WTC11 (cell line): ENCODE measurements at regions of chr5 and their contacts with region 1.

Region 1: DNA sequence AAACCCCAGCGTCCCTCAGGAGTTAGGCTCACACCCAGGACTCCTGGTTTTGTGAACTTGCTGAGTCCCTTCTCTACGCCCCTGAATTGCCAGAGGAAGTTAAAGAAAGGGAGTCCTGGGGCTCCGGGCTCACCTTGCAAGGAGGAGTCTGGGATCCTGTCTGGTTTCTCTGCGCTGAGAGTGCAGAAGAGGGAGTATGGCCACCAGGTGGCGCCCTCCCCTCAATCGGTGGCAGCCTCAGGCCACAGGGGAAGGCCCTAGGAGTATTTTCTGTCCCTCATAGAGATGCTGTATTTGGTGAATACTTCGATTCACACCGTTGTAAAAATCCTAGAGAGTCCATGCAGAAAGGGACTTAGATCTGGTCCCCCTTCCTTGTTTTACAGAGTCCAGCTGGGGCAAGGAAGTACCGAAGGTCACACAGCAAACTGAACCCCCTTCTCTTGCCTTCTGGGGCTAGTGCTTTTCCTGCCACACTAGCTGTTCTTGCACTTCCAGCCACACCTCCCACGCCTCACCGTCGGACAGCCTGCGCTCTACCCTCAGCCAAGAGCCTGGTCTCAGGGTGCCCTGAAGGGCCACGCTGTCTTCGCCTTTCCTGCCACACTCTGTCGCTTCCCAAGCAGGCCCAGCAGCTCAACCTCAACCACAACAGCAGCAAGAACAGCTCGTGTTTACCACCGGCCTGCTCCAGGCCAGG is 10.2 kb downstream of the HAND1 start:
- DNase-seq: peak; percentile 90
- ATAC-seq: peak; percentile 96
- H3K4me3 Mint-ChIP-seq: 0 out of 2 replicates have a peak overlapping the region, but pooled peaks have one; percentile 9
- H3K27ac Mint-ChIP-seq: no peak overlapping the region
- H3K4me1 Mint-ChIP-seq: peaks cover 17% of the 10 kb centered on the region
- H3K27me3 Mint-ChIP-seq: peaks cover 70% of the 10 kb centered on the region
- CTCF ChIP-seq: peak; percentile 90

Region 2: DNA sequence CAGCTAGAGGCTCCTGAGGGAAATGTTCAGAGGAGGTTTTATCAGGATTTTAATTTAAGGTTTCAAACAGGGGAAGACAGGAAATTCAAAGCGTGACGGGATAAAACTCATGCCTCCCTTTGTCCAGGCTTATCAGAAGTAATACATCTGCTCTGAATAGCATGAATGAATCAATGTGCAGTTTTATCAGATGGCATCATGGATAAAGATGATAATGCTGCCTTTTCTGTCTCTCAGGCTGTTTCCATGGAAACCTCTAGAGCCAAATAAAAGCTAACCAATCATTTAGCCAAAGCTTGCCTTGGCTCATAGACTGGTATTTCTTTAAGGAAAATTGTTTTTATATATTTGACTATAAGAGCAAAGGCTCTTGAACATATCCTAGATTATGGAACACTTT is 412.6 kb before region 1 on chr5:
- CTCF ChIA-PET with region 1: no interaction called
- POLR2A ChIA-PET with region 1: no interaction called
- DNase-seq: no peak
- ATAC-seq: no peak
- H3K4me3 Mint-ChIP-seq: no peak overlapping the region
- H3K27ac Mint-ChIP-seq: no peak overlapping the region
- H3K4me1 Mint-ChIP-seq: peaks cover 18% of the 10 kb centered on the region
- H3K27me3 Mint-ChIP-seq: peaks cover 3% of the 10 kb centered on the region; the same call in 1 of the 2 replicates
- CTCF ChIP-seq: no peak

Region 3: GRCh38 chr5:154138701-154139100 is 329.1 kb before region 1 on chr5:
- CTCF ChIA-PET with region 1: no interaction called
- POLR2A ChIA-PET with region 1: no interaction called
- DNase-seq: no peak
- ATAC-seq: peak; percentile 17
- H3K4me3 Mint-ChIP-seq: no peak overlapping the region
- H3K27ac Mint-ChIP-seq: no peak overlapping the region
- H3K4me1 Mint-ChIP-seq: peaks cover 32% of the 10 kb centered on the region
- H3K27me3 Mint-ChIP-seq: peaks cover 16% of the 10 kb centered on the region
- CTCF ChIP-seq: no peak

Region 4: DNA sequence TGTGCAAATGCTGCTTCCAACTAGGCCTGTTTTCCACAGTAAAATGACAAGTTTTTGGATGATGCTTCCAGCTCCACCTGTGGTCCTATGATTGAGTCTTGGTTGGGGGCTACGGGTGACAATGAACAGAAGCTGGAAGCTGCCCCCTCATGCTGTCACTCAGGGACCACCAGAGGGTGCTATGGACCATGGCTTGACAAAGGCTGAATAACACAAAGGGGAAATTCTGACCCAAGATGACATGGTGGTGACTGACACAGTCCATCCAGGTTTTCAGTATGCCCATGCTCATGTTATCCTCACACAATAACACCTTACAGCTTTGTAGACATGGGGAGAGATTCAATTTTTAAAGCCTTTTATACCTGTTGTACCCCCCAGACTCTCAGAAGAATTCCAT is 45.9 kb before region 1 on chr5:
- CTCF ChIA-PET with region 1: interaction called, 14 read pairs
- POLR2A ChIA-PET with region 1: no interaction called
- DNase-seq: peak; percentile 65
- ATAC-seq: peak; percentile 86
- H3K4me3 Mint-ChIP-seq: no peak overlapping the region
- H3K27ac Mint-ChIP-seq: no peak overlapping the region
- H3K4me1 Mint-ChIP-seq: peaks cover 11% of the 10 kb centered on the region
- H3K27me3 Mint-ChIP-seq: no peaks in the 10 kb centered on the region
- CTCF ChIP-seq: peak; percentile 48; the same call in 1 of the 2 replicates

Region 5: DNA sequence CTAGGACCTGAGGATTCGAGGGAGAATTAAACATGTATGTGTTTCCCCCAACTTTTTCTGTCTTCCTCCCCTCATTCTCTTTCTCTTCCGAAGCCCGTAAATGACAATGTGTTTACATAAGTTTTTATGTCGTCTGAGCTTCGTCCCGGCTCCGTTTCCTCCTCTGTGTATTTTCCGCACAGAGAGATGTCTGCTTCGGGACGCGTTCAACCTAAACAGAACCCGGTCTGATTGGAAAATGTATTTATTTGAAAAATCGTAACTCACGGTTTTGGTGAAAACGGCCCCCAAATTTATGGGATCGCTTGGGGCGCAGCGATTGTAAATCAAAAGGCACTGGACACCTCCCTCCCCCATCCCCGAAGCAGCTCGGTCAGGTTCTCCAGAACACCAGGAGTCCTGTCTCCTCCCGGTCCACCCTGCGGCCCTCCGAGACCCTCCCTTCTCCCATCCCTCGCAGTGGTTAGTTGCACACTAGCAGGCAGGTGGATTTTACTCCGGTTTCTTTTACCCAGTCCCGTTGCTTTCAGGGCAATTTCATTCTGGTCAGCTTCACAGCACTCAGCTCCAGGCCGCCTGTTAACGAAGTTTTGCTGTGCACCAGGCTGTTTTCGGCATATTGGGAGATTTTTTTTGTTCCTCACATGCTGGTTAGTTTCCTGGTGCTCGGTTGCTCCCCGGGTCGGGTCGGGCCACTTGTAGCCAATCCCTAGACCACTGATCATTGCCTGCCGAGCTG is 16.0 kb after region 1 on chr5:
- CTCF ChIA-PET with region 1: interaction called, 26 read pairs
- POLR2A ChIA-PET with region 1: no interaction called
- DNase-seq: peak; percentile 51
- ATAC-seq: no peak
- H3K4me3 Mint-ChIP-seq: peak overlapping the region; percentile 55
- H3K27ac Mint-ChIP-seq: no peak overlapping the region
- H3K4me1 Mint-ChIP-seq: peaks cover 71% of the 10 kb centered on the region
- H3K27me3 Mint-ChIP-seq: peaks cover 99% of the 10 kb centered on the region
- CTCF ChIP-seq: no peak

Region 6: GRCh38 chr5:154559398-154560276 is 91.8 kb after region 1 on chr5:
- CTCF ChIA-PET with region 1: no interaction called
- POLR2A ChIA-PET with region 1: no interaction called
- DNase-seq: no peak
- ATAC-seq: no peak
- H3K4me3 Mint-ChIP-seq: no peak overlapping the region
- H3K27ac Mint-ChIP-seq: no peak overlapping the region
- H3K4me1 Mint-ChIP-seq: no peaks in the 10 kb centered on the region
- H3K27me3 Mint-ChIP-seq: peaks cover 2% of the 10 kb centered on the region; the same call in 1 of the 2 replicates
- CTCF ChIP-seq: no peak

Region 7: GRCh38 chr5:154575546-154576428 is 108.0 kb after region 1 on chr5:
- CTCF ChIA-PET with region 1: interaction called, 10 read pairs
- POLR2A ChIA-PET with region 1: no interaction called
- DNase-seq: no peak
- ATAC-seq: peak; percentile 23; the same call in 1 of the 2 replicates
- H3K4me3 Mint-ChIP-seq: no peak overlapping the region
- H3K27ac Mint-ChIP-seq: no peak overlapping the region
- H3K4me1 Mint-ChIP-seq: peaks cover 14% of the 10 kb centered on the region
- H3K27me3 Mint-ChIP-seq: peaks cover 4% of the 10 kb centered on the region
- CTCF ChIP-seq: no peak

Region 8: DNA sequence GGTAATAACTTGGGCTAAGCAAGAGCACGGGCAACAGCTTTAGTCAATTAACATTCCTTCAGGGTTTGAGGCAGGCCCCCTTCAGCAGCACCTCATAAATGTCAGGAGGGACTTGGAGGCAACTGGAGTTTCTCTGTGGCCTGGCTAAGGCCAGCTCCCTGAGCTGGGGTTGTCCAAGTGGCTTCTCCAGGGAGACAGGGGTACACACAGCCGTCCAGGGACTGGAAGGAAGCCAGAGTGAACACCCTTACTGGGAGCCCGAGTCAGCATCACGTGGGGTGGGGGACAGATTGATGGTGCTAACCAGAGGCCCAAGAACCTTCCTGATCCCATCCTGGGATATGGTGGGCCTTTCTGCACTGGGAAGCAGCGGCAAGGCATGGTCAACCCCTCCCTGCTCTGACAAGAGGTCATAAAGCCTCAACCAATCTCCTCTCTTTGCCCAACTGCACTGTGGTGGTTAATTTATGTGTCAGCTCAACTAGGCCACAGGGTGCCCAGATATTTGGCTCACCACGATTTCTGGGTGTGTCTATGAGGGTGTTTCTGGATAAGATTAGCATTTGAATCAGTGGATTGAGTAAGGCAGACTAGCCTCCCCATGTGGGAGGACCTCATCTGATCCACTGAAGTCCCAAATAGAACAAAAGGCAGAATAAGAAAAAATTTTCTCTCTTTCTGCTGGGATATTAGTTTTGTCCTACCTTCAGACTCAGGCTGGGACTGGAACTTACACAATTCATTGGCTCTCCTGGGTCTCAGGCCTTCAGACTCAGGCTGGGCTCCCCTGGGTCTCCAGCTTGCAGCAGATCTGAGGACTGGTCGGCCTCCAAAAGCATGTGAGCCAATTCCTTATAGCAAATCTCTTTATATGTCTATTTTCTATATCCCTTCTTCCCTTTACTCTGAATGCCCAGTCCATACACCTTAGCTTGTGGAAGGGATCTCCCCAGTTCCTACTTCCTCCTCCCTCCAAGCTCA is 160.2 kb after region 1 on chr5:
- CTCF ChIA-PET with region 1: interaction called, 12 read pairs
- POLR2A ChIA-PET with region 1: no interaction called
- DNase-seq: no peak
- ATAC-seq: no peak
- H3K4me3 Mint-ChIP-seq: no peak overlapping the region
- H3K27ac Mint-ChIP-seq: no peak overlapping the region
- H3K4me1 Mint-ChIP-seq: peaks cover 2% of the 10 kb centered on the region; the same call in 1 of the 2 replicates
- H3K27me3 Mint-ChIP-seq: peaks cover 2% of the 10 kb centered on the region; the same call in 1 of the 2 replicates
- CTCF ChIP-seq: no peak

Region 9: GRCh38 chr5:154663424-154663823 is 195.6 kb after region 1 on chr5:
- CTCF ChIA-PET with region 1: no interaction called
- POLR2A ChIA-PET with region 1: no interaction called
- DNase-seq: no peak
- ATAC-seq: no peak
- H3K4me3 Mint-ChIP-seq: no peak overlapping the region
- H3K27ac Mint-ChIP-seq: no peak overlapping the region
- H3K4me1 Mint-ChIP-seq: peaks cover 2% of the 10 kb centered on the region; the same call in 1 of the 2 replicates
- H3K27me3 Mint-ChIP-seq: peaks cover 6% of the 10 kb centered on the region; the same call in 1 of the 2 replicates
- CTCF ChIP-seq: no peak